ENCODE measurements at regions of chr12 and their contacts with region 1.

Region 1: GRCh38 chr12:111444925-111445725 is 39.4 kb downstream of the SH2B3 start:
- DNase-seq: peak; percentile 93
- H3K4me3 ChIP-seq: peak overlapping the region; percentile 42
- H3K27ac ChIP-seq: peak overlapping the region; percentile 91
- H3K4me1 ChIP-seq: peaks cover 67% of the 10 kb centered on the region
- CTCF ChIP-seq: no peak

Region 2: GRCh38 chr12:111434680-111435338 is 10.3 kb before region 1 on chr12:
- CTCF ChIA-PET with region 1: interaction called, 5 read pairs
- POLR2A ChIA-PET with region 1: interaction called, 12 read pairs
- intact Hi-C with region 1: no loop called
- DNase-seq: peak; percentile 72
- H3K4me3 ChIP-seq: peak overlapping the region; percentile 45
- H3K27ac ChIP-seq: peak overlapping the region; percentile 69
- H3K4me1 ChIP-seq: peaks cover 75% of the 10 kb centered on the region
- CTCF ChIP-seq: no peak

Region 3: DNA sequence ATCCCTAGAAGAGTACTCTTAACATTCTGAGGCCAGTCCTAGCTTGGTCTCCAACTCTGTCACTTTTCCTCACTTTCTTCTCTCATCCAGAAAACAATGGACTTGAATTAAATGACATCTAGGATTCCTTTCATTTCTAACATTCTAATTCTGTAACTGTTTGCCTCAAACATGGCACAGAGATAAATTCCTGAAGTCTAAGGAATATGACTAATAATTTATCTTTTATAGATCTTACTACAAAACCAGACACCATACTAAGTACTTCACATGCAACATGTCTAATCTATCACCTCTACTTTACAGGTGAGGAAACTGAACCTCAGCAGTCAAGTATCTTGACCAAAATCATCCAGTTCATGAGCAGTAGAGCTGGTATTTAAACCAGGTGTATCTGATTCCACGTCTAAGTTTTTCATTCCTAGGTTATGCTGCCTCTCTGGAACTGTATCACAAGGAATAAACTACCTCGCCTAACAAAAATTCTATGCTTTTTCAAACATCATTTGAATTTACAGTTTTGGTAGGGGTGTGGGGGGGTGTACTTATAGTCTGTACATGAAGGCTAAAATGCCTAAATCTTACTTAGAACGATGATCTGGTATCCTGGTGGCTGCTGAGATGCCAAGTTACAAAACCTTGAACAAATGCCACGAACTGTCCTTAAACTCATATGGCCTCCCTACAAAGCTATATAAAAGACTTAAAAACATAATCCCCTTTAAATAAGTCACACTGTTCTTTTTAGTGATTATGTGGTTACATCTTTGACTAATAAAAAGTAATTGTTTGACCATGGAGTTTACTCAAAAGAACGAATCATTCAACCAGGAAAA is 112.4 kb after region 1 on chr12:
- CTCF ChIA-PET with region 1: no interaction called
- POLR2A ChIA-PET with region 1: no interaction called
- intact Hi-C with region 1: no loop called
- DNase-seq: no peak
- H3K4me3 ChIP-seq: no peak overlapping the region
- H3K27ac ChIP-seq: no peak overlapping the region
- H3K4me1 ChIP-seq: no peaks in the 10 kb centered on the region
- CTCF ChIP-seq: no peak

Region 4: DNA sequence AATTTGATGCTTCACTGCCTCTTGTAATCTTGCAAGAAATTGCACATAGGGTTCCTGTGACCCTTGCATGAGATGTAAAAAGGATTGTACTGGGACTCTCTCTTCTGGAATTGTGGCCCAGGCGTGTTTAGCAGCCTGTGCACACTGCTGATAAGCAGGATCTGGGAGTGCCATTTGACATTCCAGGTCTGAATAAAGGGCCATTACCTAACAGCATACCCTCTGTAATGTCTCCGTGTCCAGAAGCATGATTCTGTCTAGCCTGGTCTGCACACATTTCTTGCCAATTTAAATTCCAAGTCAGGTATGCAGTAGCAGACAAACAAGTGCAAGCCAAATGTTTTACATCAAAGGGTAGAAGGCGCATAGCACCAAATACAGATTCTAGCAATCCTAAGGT is 378.8 kb after region 1 on chr12:
- CTCF ChIA-PET with region 1: no interaction called
- POLR2A ChIA-PET with region 1: no interaction called
- intact Hi-C with region 1: no loop called
- DNase-seq: no peak
- H3K4me3 ChIP-seq: no peak overlapping the region
- H3K27ac ChIP-seq: no peak overlapping the region
- H3K4me1 ChIP-seq: peaks cover 32% of the 10 kb centered on the region
- CTCF ChIP-seq: no peak